A673 (cell line): ENCODE measurements at regions of chr2 and their contacts with region 1.

Region 1: DNA sequence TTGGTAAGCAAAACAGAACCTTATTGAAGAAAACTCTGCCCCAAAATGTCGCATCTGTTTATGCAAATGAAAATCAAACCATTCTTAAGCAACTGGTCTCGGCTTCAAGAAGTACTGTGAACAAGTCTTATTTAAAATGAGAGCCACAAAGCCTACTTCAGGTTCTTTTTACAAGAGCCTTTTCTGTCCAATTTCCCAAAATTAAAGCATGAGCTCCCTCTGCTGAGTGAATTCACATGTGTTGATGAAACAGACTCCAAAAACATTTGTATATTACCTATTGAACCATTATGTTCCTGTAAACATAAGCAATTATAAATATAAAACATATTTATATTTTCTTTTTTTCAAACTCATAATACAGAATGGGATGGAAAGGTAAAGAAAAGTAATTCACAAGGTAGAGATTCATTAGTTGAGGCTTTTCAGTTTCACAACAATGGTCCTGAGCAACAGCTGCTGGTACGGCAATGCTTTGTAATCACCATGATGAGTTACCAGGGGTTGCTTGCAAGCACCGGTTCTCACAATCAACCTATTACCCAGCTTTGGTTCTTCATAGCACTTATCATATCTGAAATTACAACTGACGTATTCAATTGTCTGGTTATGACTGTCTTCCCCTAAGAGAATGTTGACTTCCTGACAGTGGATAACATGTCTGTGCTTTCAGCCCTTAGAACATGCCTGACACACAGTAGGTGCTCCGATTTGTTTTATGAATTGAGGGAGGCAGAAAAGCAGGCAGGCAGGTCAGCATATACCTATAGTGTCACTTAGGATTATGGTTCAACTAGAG is 108.4 kb upstream of the BZW1 start:
- DNase-seq: peak; percentile 72
- H3K4me3 ChIP-seq: no peak overlapping the region
- H3K27ac ChIP-seq: no peak overlapping the region
- H3K4me1 ChIP-seq: peaks cover 21% of the 10 kb centered on the region
- H3K27me3 ChIP-seq: no peaks in the 10 kb centered on the region
- CTCF ChIP-seq: peak; percentile 63

Region 2: DNA sequence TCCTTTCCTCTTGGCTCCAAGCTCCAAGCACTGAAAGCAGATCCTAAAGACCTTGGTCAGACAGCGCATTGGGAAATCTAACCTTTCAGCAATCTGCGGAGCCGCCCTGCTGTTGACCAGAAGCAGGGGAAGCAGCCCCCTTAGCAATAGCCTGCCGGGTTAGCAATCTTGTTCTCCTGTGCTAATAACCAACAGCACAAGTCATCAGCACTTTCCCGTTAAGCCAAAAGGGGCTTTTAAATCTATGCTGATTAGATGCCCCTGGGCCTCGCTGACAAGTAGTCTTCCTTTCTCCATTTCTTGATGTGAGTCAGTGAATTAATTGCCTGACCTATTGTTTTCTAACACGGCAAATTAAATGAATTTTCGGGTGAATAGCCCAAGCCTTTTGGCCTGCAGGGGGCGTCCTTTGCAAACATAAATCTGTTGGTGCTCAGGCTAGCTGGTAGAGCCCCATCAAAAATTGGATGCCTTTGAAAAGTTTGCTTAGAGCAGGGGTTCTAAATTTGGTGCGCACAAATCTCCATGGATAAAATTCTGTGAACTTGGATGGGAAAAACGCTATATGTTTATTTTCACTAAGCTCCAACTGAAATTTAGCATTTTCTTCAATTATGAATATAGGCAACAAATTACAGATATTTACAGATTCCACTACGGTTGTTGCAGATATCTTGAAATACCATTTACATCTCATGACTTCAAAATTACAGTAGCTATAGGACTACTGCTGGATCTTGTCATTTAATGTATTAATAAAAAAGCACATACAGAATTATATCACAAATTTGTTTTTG is 723.3 kb before region 1 on chr2:
- CTCF ChIA-PET with region 1: no interaction called
- POLR2A ChIA-PET with region 1: no interaction called
- intact Hi-C with region 1: loop called (anchors 2 kb)
- DNase-seq: peak; percentile 83
- H3K4me3 ChIP-seq: no peak overlapping the region
- H3K27ac ChIP-seq: no peak overlapping the region
- H3K4me1 ChIP-seq: no peaks in the 10 kb centered on the region
- H3K27me3 ChIP-seq: no peaks in the 10 kb centered on the region
- CTCF ChIP-seq: peak; percentile 92

Region 3: GRCh38 chr2:200578778-200579177 is 124.5 kb before region 1 on chr2:
- CTCF ChIA-PET with region 1: interaction called, 5 read pairs
- POLR2A ChIA-PET with region 1: no interaction called
- intact Hi-C with region 1: loop called (anchors 1 kb)
- DNase-seq: peak; percentile 48
- H3K4me3 ChIP-seq: no peak overlapping the region
- H3K27ac ChIP-seq: no peak overlapping the region
- H3K4me1 ChIP-seq: no peaks in the 10 kb centered on the region
- H3K27me3 ChIP-seq: no peaks in the 10 kb centered on the region
- CTCF ChIP-seq: peak; percentile 56

Region 4: GRCh38 chr2:200735061-200735460 is 31.7 kb after region 1 on chr2:
- CTCF ChIA-PET with region 1: interaction called, 10 read pairs
- POLR2A ChIA-PET with region 1: no interaction called
- intact Hi-C with region 1: no loop called
- DNase-seq: peak; percentile 14
- H3K4me3 ChIP-seq: no peak overlapping the region
- H3K27ac ChIP-seq: no peak overlapping the region
- H3K4me1 ChIP-seq: peaks cover 8% of the 10 kb centered on the region
- H3K27me3 ChIP-seq: peaks cover 4% of the 10 kb centered on the region
- CTCF ChIP-seq: no peak

Region 5: DNA sequence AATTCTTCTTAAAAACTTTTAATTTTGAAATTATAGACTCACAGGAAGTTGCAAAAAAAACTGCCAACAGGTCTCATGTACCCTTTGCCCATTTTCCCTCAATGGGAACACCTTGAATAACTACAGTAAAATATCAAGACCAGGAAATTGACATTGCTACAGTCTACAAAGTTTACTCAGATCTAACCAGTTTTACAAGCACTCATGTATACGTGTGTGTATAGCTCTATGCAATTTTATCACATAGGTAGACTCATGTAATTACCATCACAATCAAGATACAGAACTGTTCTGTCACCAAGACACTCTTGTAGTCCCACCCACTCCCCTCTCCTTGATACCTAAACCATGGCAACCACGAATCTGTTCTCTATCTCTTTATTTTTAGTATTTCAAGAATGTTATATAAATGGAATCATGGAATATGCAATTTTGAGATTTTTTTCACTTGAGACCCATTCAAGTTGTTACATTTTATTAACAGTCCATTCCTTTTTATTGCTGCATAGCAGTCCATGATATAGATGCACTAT is 361.5 kb after region 1 on chr2:
- CTCF ChIA-PET with region 1: interaction called, 3 read pairs
- POLR2A ChIA-PET with region 1: no interaction called
- intact Hi-C with region 1: loop called (anchors 5 kb)
- DNase-seq: no peak
- H3K4me3 ChIP-seq: no peak overlapping the region
- H3K27ac ChIP-seq: no peak overlapping the region
- H3K4me1 ChIP-seq: peaks cover 10% of the 10 kb centered on the region
- H3K27me3 ChIP-seq: no peaks in the 10 kb centered on the region
- CTCF ChIP-seq: no peak